ENCODE measurements at regions of chr5 and their contacts with region 1.

Region 1: DNA sequence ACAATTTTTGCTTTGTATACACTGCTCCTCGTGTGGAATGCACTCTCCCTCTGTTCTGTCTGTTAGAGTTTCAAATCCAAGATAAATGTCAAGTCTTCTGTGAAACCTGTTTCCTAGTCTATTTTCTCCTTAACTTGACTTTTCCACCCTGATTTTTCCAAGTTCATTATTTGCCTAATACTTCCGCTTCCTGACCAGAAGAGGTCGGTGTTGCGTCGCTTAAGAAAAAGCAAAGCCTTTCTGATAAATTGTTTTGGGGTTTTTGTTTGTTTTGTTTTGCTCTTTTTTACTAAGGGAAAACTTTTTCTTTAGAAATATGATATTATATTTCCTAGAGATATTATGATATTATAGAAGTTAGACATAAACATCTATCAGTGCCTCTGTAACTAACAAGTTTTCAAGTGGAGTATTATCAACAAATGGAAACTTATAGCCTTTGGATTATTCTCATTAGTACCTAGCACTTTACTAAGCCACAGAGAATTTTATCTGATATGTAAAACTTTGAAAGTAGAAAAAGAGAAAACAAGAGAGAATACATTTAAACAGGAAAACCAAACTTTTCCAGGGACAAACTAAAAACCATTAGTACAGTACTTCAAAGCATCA is 55.8 kb downstream of the PHAX start:
- DNase-seq: peak in 4 of 9 experiments; percentile 5 to 57 (median 30)
- ATAC-seq: no peak
- H3K4me3 ChIP-seq: no peak overlapping the region
- H3K4me3 Mint-ChIP-seq: no peak overlapping the region
- H3K27ac ChIP-seq: no peak overlapping the region
- H3K27ac Mint-ChIP-seq: no peak overlapping the region
- H3K4me1 ChIP-seq: no peaks in the 10 kb centered on the region
- H3K4me1 Mint-ChIP-seq: no peaks in the 10 kb centered on the region
- H3K27me3 ChIP-seq: no peaks in the 10 kb centered on the region
- H3K27me3 Mint-ChIP-seq: no peaks in the 10 kb centered on the region
- CTCF ChIP-seq: peak; percentile 83

Region 2: GRCh38 chr5:126471875-126472537 is 184.5 kb before region 1 on chr5:
- CTCF ChIA-PET with region 1: no interaction called
- POLR2A ChIA-PET with region 1: no interaction called
- intact Hi-C with region 1: no loop called
- DNase-seq: no peak
- ATAC-seq: no peak
- H3K4me3 ChIP-seq: no peak overlapping the region
- H3K4me3 Mint-ChIP-seq: no peak overlapping the region
- H3K27ac ChIP-seq: no peak overlapping the region
- H3K27ac Mint-ChIP-seq: no peak overlapping the region
- H3K4me1 ChIP-seq: no peaks in the 10 kb centered on the region
- H3K4me1 Mint-ChIP-seq: no peaks in the 10 kb centered on the region
- H3K27me3 ChIP-seq: no peaks in the 10 kb centered on the region
- H3K27me3 Mint-ChIP-seq: no peaks in the 10 kb centered on the region
- CTCF ChIP-seq: no peak

Region 3: GRCh38 chr5:126693806-126694802 is 37.6 kb after region 1 on chr5:
- CTCF ChIA-PET with region 1: no interaction called
- POLR2A ChIA-PET with region 1: no interaction called
- intact Hi-C with region 1: no loop called
- DNase-seq: no peak
- ATAC-seq: no peak
- H3K4me3 ChIP-seq: no peak overlapping the region
- H3K4me3 Mint-ChIP-seq: no peak overlapping the region
- H3K27ac ChIP-seq: no peak overlapping the region
- H3K27ac Mint-ChIP-seq: no peak overlapping the region
- H3K4me1 ChIP-seq: no peaks in the 10 kb centered on the region
- H3K4me1 Mint-ChIP-seq: no peaks in the 10 kb centered on the region
- H3K27me3 ChIP-seq: no peaks in the 10 kb centered on the region
- H3K27me3 Mint-ChIP-seq: no peaks in the 10 kb centered on the region
- CTCF ChIP-seq: no peak

Region 4: DNA sequence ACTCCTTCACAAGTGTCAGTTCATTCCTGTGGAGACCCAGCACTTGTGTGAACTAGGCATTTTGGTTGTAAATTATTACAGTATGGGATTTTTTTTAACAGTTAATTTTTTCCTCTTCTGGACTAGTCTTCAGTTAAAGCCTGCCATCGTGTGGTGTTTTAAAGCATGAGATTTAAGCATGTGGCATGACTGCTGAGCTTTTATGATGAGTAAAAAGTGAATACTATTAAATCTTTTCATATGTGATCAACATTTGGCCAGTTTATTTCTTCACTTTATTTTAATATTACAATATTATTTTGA is 145.4 kb after region 1 on chr5:
- CTCF ChIA-PET with region 1: interaction called, 5 read pairs
- POLR2A ChIA-PET with region 1: no interaction called
- intact Hi-C with region 1: loop called in 1 of 2 experiments (anchors 1 kb)
- DNase-seq: peak in 2 of 9 experiments; percentile 39 to 54
- ATAC-seq: peak; percentile 62
- H3K4me3 ChIP-seq: no peak overlapping the region
- H3K4me3 Mint-ChIP-seq: no peak overlapping the region
- H3K27ac ChIP-seq: no peak overlapping the region
- H3K27ac Mint-ChIP-seq: no peak overlapping the region
- H3K4me1 ChIP-seq: no peaks in the 10 kb centered on the region
- H3K4me1 Mint-ChIP-seq: peaks cover 33% of the 10 kb centered on the region
- H3K27me3 ChIP-seq: no peaks in the 10 kb centered on the region
- H3K27me3 Mint-ChIP-seq: no peaks in the 10 kb centered on the region
- CTCF ChIP-seq: peak; percentile 36

Region 5: GRCh38 chr5:126808521-126808988 is 152.1 kb after region 1 on chr5:
- CTCF ChIA-PET with region 1: interaction called, 5 read pairs
- POLR2A ChIA-PET with region 1: no interaction called
- intact Hi-C with region 1: loop called in 1 of 2 experiments (anchors 1 kb)
- DNase-seq: peak in 2 of 9 experiments; percentile 29 to 50
- ATAC-seq: no peak
- H3K4me3 ChIP-seq: no peak overlapping the region
- H3K4me3 Mint-ChIP-seq: no peak overlapping the region
- H3K27ac ChIP-seq: no peak overlapping the region
- H3K27ac Mint-ChIP-seq: no peak overlapping the region
- H3K4me1 ChIP-seq: no peaks in the 10 kb centered on the region
- H3K4me1 Mint-ChIP-seq: peaks cover 26% of the 10 kb centered on the region
- H3K27me3 ChIP-seq: no peaks in the 10 kb centered on the region
- H3K27me3 Mint-ChIP-seq: no peaks in the 10 kb centered on the region
- CTCF ChIP-seq: peak; percentile 64

Region 6: DNA sequence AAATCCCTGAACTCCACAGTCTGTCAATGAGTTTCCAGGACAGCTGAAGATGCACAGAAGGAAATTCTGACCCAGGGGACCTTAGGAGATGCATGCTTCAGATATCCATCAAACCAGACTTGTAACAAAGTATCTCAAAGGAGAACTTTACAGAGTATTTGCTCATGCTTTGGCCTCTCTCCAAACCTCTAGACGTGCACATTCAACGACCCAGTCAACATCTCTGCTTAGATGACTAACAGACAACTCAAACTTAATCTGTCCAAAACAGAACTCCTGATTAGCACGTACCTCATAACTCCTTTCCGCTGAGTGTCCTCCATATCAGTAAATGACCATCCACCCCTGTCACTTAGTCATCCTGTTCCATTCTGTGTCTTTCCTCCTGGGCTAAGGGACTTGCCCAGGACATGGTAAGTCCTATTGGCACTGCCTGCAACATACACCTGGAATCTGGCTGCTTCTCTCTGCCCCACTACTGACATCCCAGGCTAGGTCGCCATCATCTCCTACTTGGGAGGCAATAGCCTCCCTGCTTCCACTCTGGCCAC is 227.8 kb after region 1 on chr5:
- CTCF ChIA-PET with region 1: no interaction called
- POLR2A ChIA-PET with region 1: no interaction called
- intact Hi-C with region 1: no loop called
- DNase-seq: no peak
- ATAC-seq: no peak
- H3K4me3 ChIP-seq: no peak overlapping the region
- H3K4me3 Mint-ChIP-seq: no peak overlapping the region
- H3K27ac ChIP-seq: no peak overlapping the region
- H3K27ac Mint-ChIP-seq: no peak overlapping the region
- H3K4me1 ChIP-seq: no peaks in the 10 kb centered on the region
- H3K4me1 Mint-ChIP-seq: peaks cover 2% of the 10 kb centered on the region
- H3K27me3 ChIP-seq: no peaks in the 10 kb centered on the region
- H3K27me3 Mint-ChIP-seq: no peaks in the 10 kb centered on the region
- CTCF ChIP-seq: no peak

Region 7: GRCh38 chr5:127040796-127041520 is 384.5 kb after region 1 on chr5:
- CTCF ChIA-PET with region 1: no interaction called
- POLR2A ChIA-PET with region 1: no interaction called
- intact Hi-C with region 1: loop called in 1 of 2 experiments (anchors 5 kb)
- DNase-seq: no peak
- ATAC-seq: no peak
- H3K4me3 ChIP-seq: no peak overlapping the region
- H3K4me3 Mint-ChIP-seq: no peak overlapping the region
- H3K27ac ChIP-seq: no peak overlapping the region
- H3K27ac Mint-ChIP-seq: no peak overlapping the region
- H3K4me1 ChIP-seq: no peaks in the 10 kb centered on the region
- H3K4me1 Mint-ChIP-seq: no peaks in the 10 kb centered on the region
- H3K27me3 ChIP-seq: no peaks in the 10 kb centered on the region
- H3K27me3 Mint-ChIP-seq: no peaks in the 10 kb centered on the region
- CTCF ChIP-seq: no peak

Region 8: DNA sequence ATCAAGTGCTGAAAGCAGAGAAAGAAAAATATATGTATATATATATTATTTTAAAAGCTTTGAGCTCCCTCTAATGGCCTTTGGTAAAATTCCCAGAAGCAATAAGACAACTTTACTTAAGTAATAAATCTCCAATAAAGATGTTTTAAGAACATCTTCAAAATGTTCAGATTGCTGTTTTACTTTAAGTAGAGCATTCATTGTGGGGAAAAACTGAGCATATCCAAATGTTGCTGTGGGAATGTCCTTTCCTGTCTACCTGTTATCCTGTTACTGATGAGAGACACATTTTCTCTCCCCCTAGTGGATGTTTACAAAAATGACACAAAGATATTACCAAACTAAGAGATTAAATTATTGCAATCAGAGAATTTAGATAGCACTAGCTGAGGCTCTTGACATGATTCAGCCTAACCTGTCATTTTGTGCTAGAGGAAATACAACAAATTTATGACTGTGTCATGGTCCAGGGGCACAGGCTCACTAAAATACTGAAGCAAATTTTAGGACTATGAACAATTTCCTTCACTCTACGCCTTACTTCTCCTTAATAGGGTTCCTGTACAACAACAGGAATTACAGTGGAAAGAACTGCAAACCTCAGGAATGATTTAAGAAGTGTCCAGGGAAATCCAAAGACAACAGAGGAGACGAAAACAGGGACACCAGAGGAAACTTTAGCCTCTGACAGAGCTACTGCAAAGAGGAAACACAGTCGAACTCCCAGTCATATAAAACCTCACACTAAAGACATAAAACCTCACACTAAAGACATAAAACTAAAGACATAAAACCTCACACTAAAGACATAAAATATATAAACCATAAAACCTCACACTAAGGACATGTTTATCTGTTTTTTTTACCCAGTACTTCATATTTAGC is 836.6 kb after region 1 on chr5:
- CTCF ChIA-PET with region 1: interaction called, 5 read pairs
- POLR2A ChIA-PET with region 1: no interaction called
- intact Hi-C with region 1: loop called in 1 of 2 experiments (anchors 5 kb)
- DNase-seq: peak in 2 of 9 experiments; percentile 40 to 54
- ATAC-seq: peak; percentile 71
- H3K4me3 ChIP-seq: no peak overlapping the region
- H3K4me3 Mint-ChIP-seq: no peak overlapping the region
- H3K27ac ChIP-seq: no peak overlapping the region
- H3K27ac Mint-ChIP-seq: no peak overlapping the region
- H3K4me1 ChIP-seq: no peaks in the 10 kb centered on the region
- H3K4me1 Mint-ChIP-seq: no peaks in the 10 kb centered on the region
- H3K27me3 ChIP-seq: no peaks in the 10 kb centered on the region
- H3K27me3 Mint-ChIP-seq: peaks cover 27% of the 10 kb centered on the region
- CTCF ChIP-seq: peak; percentile 94

Measured in CD8-positive, alpha-beta T cell (primary cell).